CD8-positive, alpha-beta memory T cell (primary cell): ENCODE measurements at regions of chr3 and their contacts with region 1.

Region 1: GRCh38 chr3:49839193-49839809 is 17.1 kb downstream of the TRAIP start:
- DNase-seq: peak; percentile 67 to 88 (median 72)
- H3K4me3 ChIP-seq: no peak overlapping the region
- H3K4me3 Mint-ChIP-seq: no peak overlapping the region
- H3K27ac ChIP-seq: no peak overlapping the region
- H3K27ac Mint-ChIP-seq: no peak overlapping the region
- H3K4me1 ChIP-seq: no peaks in the 10 kb centered on the region
- H3K4me1 Mint-ChIP-seq: peaks cover 0 to 4% (median 2%) of the 10 kb centered on the region in 3 donors
- H3K27me3 ChIP-seq: no peaks in the 10 kb centered on the region
- H3K27me3 Mint-ChIP-seq: peaks cover 0 to 2% of the 10 kb centered on the region in 2 donors

Region 2: DNA sequence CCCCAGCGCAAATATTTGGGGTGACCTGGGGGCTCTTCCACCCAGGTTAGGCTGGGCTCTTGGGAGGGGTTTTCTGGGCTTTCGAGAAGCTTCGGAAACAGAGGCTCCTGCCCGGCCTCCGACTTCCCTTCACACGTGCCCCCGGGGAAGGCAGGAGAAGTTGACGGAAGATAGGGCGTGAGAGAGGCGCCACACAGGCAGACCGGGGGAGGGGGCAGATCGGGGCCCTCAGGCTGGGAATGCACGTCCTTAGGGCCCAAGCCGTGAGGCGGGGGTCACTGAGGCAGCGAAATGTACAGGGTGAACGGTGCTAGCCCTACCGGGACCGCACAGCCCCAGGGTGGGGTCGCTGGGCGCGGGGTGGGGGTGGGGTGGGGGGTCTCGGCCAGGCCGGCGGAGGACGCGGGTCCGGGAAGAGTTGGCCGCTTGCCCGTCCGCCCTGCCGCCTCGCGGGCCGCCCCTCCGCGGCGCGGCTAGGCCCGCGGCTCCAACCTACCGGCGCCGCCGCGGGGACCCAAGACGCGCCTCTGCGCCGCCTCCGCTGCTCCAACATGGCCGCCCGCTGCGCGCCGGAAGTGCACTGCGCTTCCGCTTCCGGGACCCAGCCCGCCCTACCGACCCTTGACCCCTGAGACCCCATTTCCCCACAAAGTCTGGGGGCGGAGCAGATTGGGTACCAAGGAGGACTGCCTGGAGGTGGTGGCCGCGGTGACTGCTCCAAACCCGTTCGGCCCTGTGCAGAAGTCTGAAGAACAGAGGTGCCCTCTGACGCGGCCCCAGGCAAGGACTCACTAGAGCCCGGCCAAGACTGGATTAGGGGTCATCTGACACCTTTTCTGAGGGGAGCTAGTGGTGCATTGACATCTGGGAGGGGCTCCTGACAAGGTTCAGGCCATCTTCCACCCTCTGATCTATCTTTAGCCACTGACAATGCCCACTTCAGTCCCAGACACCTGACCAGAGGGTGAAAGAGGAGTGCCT is 673.2 kb before region 1 on chr3 and contains the start of gene CCDC71:
- CTCF ChIA-PET with region 1: no interaction called
- POLR2A ChIA-PET with region 1: no interaction called
- DNase-seq: peak; percentile 63 to 85 (median 72)
- H3K4me3 ChIP-seq: peak within 1 kb of the TSS; percentile 88
- H3K4me3 Mint-ChIP-seq: peak within 1 kb of the TSS; percentile 90 to 96 (median 93)
- H3K27ac ChIP-seq: peak within 1 kb of the TSS; percentile 40
- H3K27ac Mint-ChIP-seq: peak within 1 kb of the TSS; percentile 89 to 99 (median 94)
- H3K4me1 ChIP-seq: peaks cover 27% of the 10 kb centered on the region
- H3K4me1 Mint-ChIP-seq: peaks cover 34 to 54% (median 37%) of the 10 kb centered on the region in 3 donors
- H3K27me3 ChIP-seq: no peaks in the 10 kb centered on the region
- H3K27me3 Mint-ChIP-seq: peaks cover 0 to 6% of the 10 kb centered on the region in 2 donors
- total RNA-seq, gene CCDC71: 32.1 to 34.2 TPM

Region 3: GRCh38 chr3:49539659-49540560 is 299.4 kb before region 1 on chr3:
- CTCF ChIA-PET with region 1: interaction called, 32 read pairs
- POLR2A ChIA-PET with region 1: interaction called, 7 read pairs
- DNase-seq: peak; percentile 83 to 92 (median 89)
- H3K4me3 ChIP-seq: peak overlapping the region; percentile 80
- H3K4me3 Mint-ChIP-seq: peak overlapping the region; percentile 77 to 93 (median 83)
- H3K27ac ChIP-seq: peak overlapping the region; percentile 59
- H3K27ac Mint-ChIP-seq: peak overlapping the region in 7 of 8 donors; percentile 17 to 74 (median 64)
- H3K4me1 ChIP-seq: peaks cover 7% of the 10 kb centered on the region
- H3K4me1 Mint-ChIP-seq: peaks cover 0 to 11% (median 6%) of the 10 kb centered on the region in 3 donors
- H3K27me3 ChIP-seq: no peaks in the 10 kb centered on the region
- H3K27me3 Mint-ChIP-seq: peaks cover 1 to 14% of the 10 kb centered on the region in 2 donors

Region 4: GRCh38 chr3:49703443-49703927 is 135.8 kb before region 1 on chr3:
- CTCF ChIA-PET with region 1: interaction called, 21 read pairs
- POLR2A ChIA-PET with region 1: no interaction called
- DNase-seq: peak; percentile 40 to 78 (median 58)
- H3K4me3 ChIP-seq: no peak overlapping the region
- H3K4me3 Mint-ChIP-seq: no peak overlapping the region
- H3K27ac ChIP-seq: no peak overlapping the region
- H3K27ac Mint-ChIP-seq: peak overlapping the region in 1 of 8 donors; percentile 43
- H3K4me1 ChIP-seq: no peaks in the 10 kb centered on the region
- H3K4me1 Mint-ChIP-seq: peaks cover 0 to 4% (median 3%) of the 10 kb centered on the region in 3 donors
- H3K27me3 ChIP-seq: no peaks in the 10 kb centered on the region
- H3K27me3 Mint-ChIP-seq: no peaks in the 10 kb centered on the region

Region 5: GRCh38 chr3:49733551-49733950 is 105.8 kb before region 1 on chr3:
- CTCF ChIA-PET with region 1: no interaction called
- POLR2A ChIA-PET with region 1: no interaction called
- DNase-seq: no peak
- H3K4me3 ChIP-seq: no peak overlapping the region
- H3K4me3 Mint-ChIP-seq: no peak overlapping the region
- H3K27ac ChIP-seq: no peak overlapping the region
- H3K27ac Mint-ChIP-seq: no peak overlapping the region
- H3K4me1 ChIP-seq: no peaks in the 10 kb centered on the region
- H3K4me1 Mint-ChIP-seq: peaks cover 0 to under 1% (median under 1%) of the 10 kb centered on the region in 3 donors
- H3K27me3 ChIP-seq: no peaks in the 10 kb centered on the region
- H3K27me3 Mint-ChIP-seq: peaks cover 0 to 2% of the 10 kb centered on the region in 2 donors

Region 6: GRCh38 chr3:49786241-49786958 is 52.9 kb before region 1 on chr3 and contains the start of gene IP6K1:
- CTCF ChIA-PET with region 1: interaction called, 14 read pairs
- POLR2A ChIA-PET with region 1: interaction called, 3 read pairs
- DNase-seq: peak; percentile 99 to 100 (median 99)
- H3K4me3 ChIP-seq: peak within 1 kb of the TSS; percentile 90
- H3K4me3 Mint-ChIP-seq: peak within 1 kb of the TSS; percentile 93 to 98 (median 94)
- H3K27ac ChIP-seq: peak within 1 kb of the TSS; percentile 95
- H3K27ac Mint-ChIP-seq: peak within 1 kb of the TSS; percentile 98 to 100 (median 99)
- H3K4me1 ChIP-seq: peaks cover 35% of the 10 kb centered on the region
- H3K4me1 Mint-ChIP-seq: peaks cover 24 to 54% (median 44%) of the 10 kb centered on the region in 3 donors
- H3K27me3 ChIP-seq: no peaks in the 10 kb centered on the region
- H3K27me3 Mint-ChIP-seq: peaks cover 0 to 2% of the 10 kb centered on the region in 2 donors
- total RNA-seq, gene IP6K1: 37.1 to 47.5 TPM

Region 7: GRCh38 chr3:49802719-49803464 is 36.4 kb before region 1 on chr3 and contains the start of gene INKA1:
- CTCF ChIA-PET with region 1: interaction called, 246 read pairs
- POLR2A ChIA-PET with region 1: interaction called, 41 read pairs
- DNase-seq: peak; percentile 83 to 92 (median 83)
- H3K4me3 ChIP-seq: peak within 1 kb of the TSS; percentile 91
- H3K4me3 Mint-ChIP-seq: peak within 1 kb of the TSS; percentile 86 to 95 (median 91)
- H3K27ac ChIP-seq: peak within 1 kb of the TSS; percentile 86
- H3K27ac Mint-ChIP-seq: peak within 1 kb of the TSS; percentile 81 to 97 (median 93)
- H3K4me1 ChIP-seq: peaks cover 35% of the 10 kb centered on the region
- H3K4me1 Mint-ChIP-seq: peaks cover 24 to 51% (median 33%) of the 10 kb centered on the region in 3 donors
- H3K27me3 ChIP-seq: no peaks in the 10 kb centered on the region
- H3K27me3 Mint-ChIP-seq: peaks cover 0 to 6% of the 10 kb centered on the region in 2 donors
- total RNA-seq, gene INKA1: 1.1 to 1.7 TPM

Region 8: GRCh38 chr3:49813497-49814174 is 25.7 kb before region 1 on chr3 and contains the start of gene UBA7:
- CTCF ChIA-PET with region 1: interaction called, 246 read pairs
- POLR2A ChIA-PET with region 1: no interaction called
- DNase-seq: peak in 4 of 5 donors; percentile 29 to 62 (median 44)
- H3K4me3 ChIP-seq: peak within 1 kb of the TSS; percentile 75
- H3K4me3 Mint-ChIP-seq: peak within 1 kb of the TSS; percentile 96 to 98 (median 98)
- H3K27ac ChIP-seq: peak within 1 kb of the TSS; percentile 63
- H3K27ac Mint-ChIP-seq: peak within 1 kb of the TSS; percentile 94 to 99 (median 99)
- H3K4me1 ChIP-seq: peaks cover 30% of the 10 kb centered on the region
- H3K4me1 Mint-ChIP-seq: peaks cover 26 to 47% (median 36%) of the 10 kb centered on the region in 3 donors
- H3K27me3 ChIP-seq: no peaks in the 10 kb centered on the region
- H3K27me3 Mint-ChIP-seq: no peaks in the 10 kb centered on the region
- total RNA-seq, gene UBA7: 57.8 to 58.3 TPM

Region 9: DNA sequence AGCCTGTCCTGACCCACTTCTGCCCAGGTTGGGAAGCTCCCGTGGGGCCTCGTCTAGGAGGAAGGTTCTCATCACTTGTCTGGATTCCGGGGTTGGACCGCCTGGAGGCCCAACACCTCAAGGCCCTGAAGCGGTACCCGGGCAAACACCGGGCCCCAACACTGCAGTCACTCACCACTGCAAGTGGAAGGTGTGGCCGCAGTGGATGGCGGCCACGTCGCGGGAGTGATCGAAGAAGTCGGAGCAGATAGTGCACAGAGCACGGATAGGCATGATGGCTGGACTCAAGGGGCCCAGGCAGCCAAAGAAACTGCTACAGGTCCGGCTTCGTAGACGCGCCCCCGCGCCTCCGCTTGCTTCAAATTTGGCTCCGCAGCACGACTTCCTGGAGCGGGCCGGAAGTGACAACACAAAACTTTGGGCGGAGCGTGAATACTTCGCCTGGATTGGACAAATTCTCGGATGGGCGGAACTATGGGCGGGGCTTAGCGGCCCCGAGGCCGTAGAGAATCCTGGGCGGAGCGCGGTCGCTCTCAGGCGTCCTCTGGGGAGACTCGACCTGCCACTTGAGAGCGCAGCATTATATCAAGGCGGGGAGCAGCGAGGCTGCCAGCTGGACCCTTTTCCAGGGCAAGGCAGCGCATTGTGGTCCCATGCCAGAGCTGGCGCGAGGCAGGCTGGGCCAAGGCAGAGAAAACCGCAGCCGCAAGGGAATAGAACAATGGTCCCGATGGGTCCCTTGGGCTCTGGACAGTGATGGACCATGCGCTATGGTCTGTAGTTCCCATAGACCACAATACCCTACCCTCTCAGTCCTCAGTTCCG is 17.1 kb after region 1 on chr3 and contains the start of gene TRAIP:
- CTCF ChIA-PET with region 1: interaction called, 12 read pairs
- POLR2A ChIA-PET with region 1: no interaction called
- DNase-seq: peak; percentile 91 to 95 (median 92)
- H3K4me3 ChIP-seq: peak within 1 kb of the TSS; percentile 90
- H3K4me3 Mint-ChIP-seq: peak within 1 kb of the TSS; percentile 78 to 89 (median 86)
- H3K27ac ChIP-seq: peak within 1 kb of the TSS; percentile 76
- H3K27ac Mint-ChIP-seq: peak within 1 kb of the TSS; percentile 62 to 96 (median 88)
- H3K4me1 ChIP-seq: peaks cover 14% of the 10 kb centered on the region
- H3K4me1 Mint-ChIP-seq: peaks cover 10 to 17% (median 12%) of the 10 kb centered on the region in 3 donors
- H3K27me3 ChIP-seq: no peaks in the 10 kb centered on the region
- H3K27me3 Mint-ChIP-seq: peaks cover 0 to 4% of the 10 kb centered on the region in 2 donors
- total RNA-seq, gene TRAIP: 21.9 to 22.9 TPM

Region 10: DNA sequence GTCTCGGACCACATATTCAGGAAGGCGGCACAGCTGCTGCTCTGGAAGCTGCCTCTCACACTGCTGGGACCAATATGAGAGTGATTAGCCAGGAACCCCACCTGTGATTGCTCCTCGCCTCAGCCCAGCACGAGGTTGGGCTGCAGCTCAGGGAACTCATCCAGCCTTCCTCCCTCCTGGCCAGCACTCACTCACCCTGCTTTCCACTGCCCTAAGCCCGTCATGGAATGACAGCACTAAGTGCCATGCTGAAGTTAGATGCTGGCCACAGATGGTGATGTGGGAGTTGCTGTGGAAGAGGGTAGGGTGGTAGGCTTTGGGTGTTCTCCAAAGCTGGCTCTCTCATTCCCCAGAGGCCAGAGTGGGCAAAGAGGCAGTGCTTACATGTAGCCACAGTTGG is 57.0 kb after region 1 on chr3:
- CTCF ChIA-PET with region 1: no interaction called
- POLR2A ChIA-PET with region 1: no interaction called
- DNase-seq: no peak
- H3K4me3 ChIP-seq: no peak overlapping the region
- H3K4me3 Mint-ChIP-seq: no peak overlapping the region
- H3K27ac ChIP-seq: no peak overlapping the region
- H3K27ac Mint-ChIP-seq: no peak overlapping the region
- H3K4me1 ChIP-seq: no peaks in the 10 kb centered on the region
- H3K4me1 Mint-ChIP-seq: peaks cover 0 to 3% (median 0%) of the 10 kb centered on the region in 3 donors
- H3K27me3 ChIP-seq: no peaks in the 10 kb centered on the region
- H3K27me3 Mint-ChIP-seq: no peaks in the 10 kb centered on the region